BJ (cell line): ENCODE measurements at regions of chr11 and their contacts with region 1.

Region 1: DNA sequence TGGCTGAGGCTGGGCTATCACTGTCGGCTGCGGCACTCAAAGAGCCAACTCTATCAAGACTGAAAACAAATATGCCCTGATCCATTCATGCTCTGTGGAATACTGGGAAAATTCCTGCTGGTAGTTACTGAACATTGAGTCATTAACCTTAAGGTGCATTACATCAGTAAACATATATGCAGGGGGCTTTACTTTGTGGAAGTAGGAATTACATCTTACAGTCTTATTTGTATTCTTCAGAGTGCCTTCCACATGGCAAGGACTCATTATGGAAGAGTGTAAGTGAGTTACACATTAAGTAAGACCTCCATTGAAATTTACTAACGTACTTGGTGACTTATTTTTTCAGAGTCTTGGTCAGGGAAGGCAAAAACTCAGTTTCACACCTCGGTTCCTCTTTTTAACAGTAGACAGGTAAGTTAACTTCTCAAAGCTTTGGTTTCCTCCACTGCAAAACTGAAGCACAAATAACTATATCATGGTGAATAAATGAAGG is 4.5 kb downstream of the OR5B21 start:
- DNase-seq: no peak
- H3K4me3 ChIP-seq: no peak overlapping the region
- H3K27me3 ChIP-seq: no peaks in the 10 kb centered on the region
- CTCF ChIP-seq: no peak

Region 2: GRCh38 chr11:58513747-58514367 is 10.4 kb after region 1 on chr11:
- CTCF ChIA-PET with region 1: interaction called, 12 read pairs
- POLR2A ChIA-PET with region 1: no interaction called
- DNase-seq: peak; percentile 14
- H3K4me3 ChIP-seq: no peak overlapping the region
- H3K27me3 ChIP-seq: no peaks in the 10 kb centered on the region
- CTCF ChIP-seq: peak; percentile 66